H1 (cell line): ENCODE measurements at regions of chr1 and their contacts with region 1.

Region 1: GRCh38 chr1:26999440-26999987 is 6.0 kb downstream of the TRNP1 start:
- DNase-seq: peak; percentile 79 to 94
- H3K4me3 ChIP-seq: peak overlapping the region in 2 of 4 experiments; percentile 15 to 29; a peak in 3 of 8 replicates
- H3K27ac ChIP-seq: peak overlapping the region; percentile 80
- H3K4me1 ChIP-seq: peaks cover 27 to 65% (median 38%) of the 10 kb centered on the region in 4 experiments
- H3K27me3 ChIP-seq: no peaks in the 10 kb centered on the region; a peak in 1 of 7 replicates
- CTCF ChIP-seq: peak in 2 of 3 experiments; percentile 4 to 21; a peak in 1 of 4 replicates
- EP300 ChIP-seq: peak in 1 of 2 experiments; percentile 98; a peak in 2 of 3 replicates
- POLR2A ChIP-seq: peak in 1 of 2 experiments; percentile 87; a peak in 2 of 3 replicates
- RAD21 ChIP-seq: peak in 1 of 2 experiments; percentile 3; a peak in 1 of 4 replicates

Region 2: DNA sequence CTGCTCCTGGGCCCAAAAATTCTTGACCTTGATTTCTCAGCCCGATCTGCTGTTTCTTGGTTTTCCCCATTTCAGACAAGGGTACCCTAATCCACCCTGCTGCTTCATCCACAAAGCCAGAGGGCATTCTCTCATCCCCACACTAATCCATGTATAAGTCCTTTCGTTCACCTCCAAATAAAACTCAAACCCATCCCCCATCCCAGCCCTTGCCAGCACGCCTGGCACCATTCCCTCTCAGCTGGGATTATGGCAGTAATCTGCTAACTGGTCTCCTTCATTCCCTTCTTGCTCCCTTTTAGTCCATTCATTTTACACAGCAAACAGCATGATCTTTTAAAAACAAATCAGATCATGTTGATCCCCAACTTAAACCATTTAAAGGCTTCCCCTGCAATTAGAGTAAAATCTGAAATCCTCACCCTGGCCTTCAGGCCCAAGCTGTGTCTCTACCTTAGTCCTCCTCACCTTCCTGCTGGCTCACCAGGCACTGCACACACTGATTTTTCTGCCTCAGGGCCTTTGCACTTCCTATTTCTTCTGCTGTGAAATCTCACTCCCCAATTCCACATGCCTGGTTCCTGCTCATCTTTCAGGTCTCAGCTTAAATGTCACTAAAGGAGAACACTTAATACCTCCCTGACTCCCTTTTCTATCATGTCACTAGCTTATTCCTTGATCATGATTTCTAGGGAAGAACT is 18.2 kb before region 1 on chr1:
- CTCF ChIA-PET with region 1: interaction called, 15 read pairs
- POLR2A ChIA-PET with region 1: interaction called, 1,829 read pairs
- DNase-seq: no peak
- H3K4me3 ChIP-seq: no peak overlapping the region
- H3K27ac ChIP-seq: no peak overlapping the region
- H3K4me1 ChIP-seq: no peaks in the 10 kb centered on the region
- H3K27me3 ChIP-seq: no peaks in the 10 kb centered on the region
- CTCF ChIP-seq: no peak
- EP300 ChIP-seq: no peak
- POLR2A ChIP-seq: no peak
- RAD21 ChIP-seq: no peak

Region 3: GRCh38 chr1:27031235-27032118 is 32.0 kb after region 1 on chr1:
- CTCF ChIA-PET with region 1: interaction called, 139 read pairs
- POLR2A ChIA-PET with region 1: interaction called, 1,829 read pairs
- DNase-seq: peak in 1 of 2 experiments; percentile 80
- H3K4me3 ChIP-seq: peak overlapping the region; percentile 9 to 48 (median 23); a peak in 7 of 8 replicates
- H3K27ac ChIP-seq: peak overlapping the region; percentile 77
- H3K4me1 ChIP-seq: peaks cover 16 to 29% (median 19%) of the 10 kb centered on the region in 4 experiments
- H3K27me3 ChIP-seq: no peaks in the 10 kb centered on the region
- CTCF ChIP-seq: no peak
- EP300 ChIP-seq: peak; percentile 40 to 57; a peak in 1 of 3 replicates
- POLR2A ChIP-seq: peak in 1 of 2 experiments; percentile 47; a peak in 2 of 3 replicates
- RAD21 ChIP-seq: peak in 1 of 2 experiments; percentile 22; a peak in 1 of 4 replicates

Region 4: GRCh38 chr1:27097484-27097917 is 98.0 kb after region 1 on chr1:
- CTCF ChIA-PET with region 1: interaction called, 35 read pairs
- POLR2A ChIA-PET with region 1: interaction called, 10 read pairs
- DNase-seq: peak; percentile 38 to 93
- H3K4me3 ChIP-seq: no peak overlapping the region
- H3K27ac ChIP-seq: no peak overlapping the region
- H3K4me1 ChIP-seq: peaks cover 0 to 20% (median 13%) of the 10 kb centered on the region in 4 experiments; a peak in 6 of 7 replicates
- H3K27me3 ChIP-seq: no peaks in the 10 kb centered on the region
- CTCF ChIP-seq: peak in 2 of 3 experiments; percentile 96; a peak in 3 of 4 replicates
- EP300 ChIP-seq: no peak
- POLR2A ChIP-seq: no peak
- RAD21 ChIP-seq: peak; percentile 98 to 99